Activated B cell treated with CpG ODN at 0.5 μM for 24 hours (primary cell): ENCODE measurements at regions of chr2 and their contacts with region 1.

Region 1: DNA sequence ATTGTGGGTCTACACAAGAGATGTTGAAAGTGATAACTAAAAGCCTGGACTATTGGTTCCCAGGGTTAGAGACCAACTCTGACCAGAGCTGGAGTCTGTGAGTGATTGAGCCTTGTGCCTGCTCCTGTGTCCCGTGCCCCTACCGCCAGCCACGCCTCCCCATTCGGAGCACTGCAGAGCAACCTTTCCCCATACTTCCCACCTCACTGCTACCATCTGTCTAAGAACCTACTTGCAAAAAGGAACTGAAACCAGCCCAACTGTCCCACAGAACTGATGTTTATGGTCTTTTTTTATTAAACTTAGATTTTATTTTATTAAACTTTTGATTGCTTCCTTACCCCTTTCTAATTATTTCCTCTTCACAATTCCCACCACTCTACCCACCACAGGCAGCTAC is 300.3 kb upstream of the MGAT5 start:
- DNase-seq: peak; percentile 44
- ATAC-seq: peak; percentile 84
- H3K4me3 Mint-ChIP-seq: peak overlapping the region; percentile 46
- H3K27ac Mint-ChIP-seq: peak overlapping the region; percentile 78
- H3K4me1 Mint-ChIP-seq: peaks cover 83% of the 10 kb centered on the region
- H3K27me3 Mint-ChIP-seq: no peaks in the 10 kb centered on the region
- CTCF ChIP-seq: no peak

Region 2: GRCh38 chr2:133231264-133231663 is 722.3 kb before region 1 on chr2:
- CTCF ChIA-PET with region 1: no interaction called
- POLR2A ChIA-PET with region 1: no interaction called
- intact Hi-C with region 1: no loop called
- DNase-seq: no peak
- ATAC-seq: no peak
- H3K4me3 Mint-ChIP-seq: no peak overlapping the region
- H3K27ac Mint-ChIP-seq: no peak overlapping the region
- H3K4me1 Mint-ChIP-seq: no peaks in the 10 kb centered on the region
- H3K27me3 Mint-ChIP-seq: no peaks in the 10 kb centered on the region
- CTCF ChIP-seq: no peak

Region 3: DNA sequence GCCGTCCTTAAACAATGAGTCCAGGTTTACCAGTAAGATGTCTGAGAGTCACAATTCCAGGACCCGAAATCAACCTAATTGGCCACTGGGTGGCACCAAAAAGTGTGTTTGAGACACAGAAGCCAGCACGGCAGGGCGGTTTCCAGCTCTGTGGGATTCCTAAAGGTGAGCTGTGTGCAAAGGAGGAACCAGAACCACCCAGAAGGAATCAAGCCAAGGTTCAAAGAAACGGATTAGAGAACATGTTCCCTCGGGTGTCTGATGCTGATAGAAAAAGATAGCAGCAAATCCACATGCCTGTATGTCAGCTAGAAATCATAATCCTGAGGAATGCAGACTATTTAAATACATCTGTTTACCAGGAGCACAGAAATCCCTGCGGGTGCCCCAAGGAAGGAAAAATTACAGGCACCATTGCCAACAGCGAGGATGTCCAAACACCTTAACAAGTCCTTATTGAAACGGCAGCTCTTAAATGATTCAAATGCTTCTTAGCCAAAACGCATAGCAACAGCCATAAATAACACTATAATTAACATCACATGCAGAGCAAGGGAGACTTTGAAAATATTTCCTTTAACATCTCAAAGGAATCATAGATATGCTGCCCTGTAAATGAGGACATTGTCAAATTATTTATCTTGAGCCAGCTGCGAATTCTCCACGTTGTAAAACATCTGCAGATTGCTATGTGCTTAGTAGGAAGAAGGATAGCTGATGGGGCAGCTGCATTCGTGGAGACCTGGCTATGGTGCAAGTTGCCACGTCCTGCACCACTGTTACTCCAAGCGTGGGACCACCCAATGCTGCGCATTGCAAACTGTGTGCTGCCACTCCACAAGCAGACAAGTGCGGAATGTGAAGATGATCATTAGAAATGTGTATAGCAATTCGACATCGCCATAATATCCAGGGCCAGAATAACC is 66.5 kb before region 1 on chr2:
- CTCF ChIA-PET with region 1: interaction called, 4 read pairs
- POLR2A ChIA-PET with region 1: no interaction called
- intact Hi-C with region 1: loop called (anchors 2 kb)
- DNase-seq: peak; percentile 36
- ATAC-seq: peak; percentile 70
- H3K4me3 Mint-ChIP-seq: no peak overlapping the region
- H3K27ac Mint-ChIP-seq: no peak overlapping the region
- H3K4me1 Mint-ChIP-seq: peaks cover 10% of the 10 kb centered on the region
- H3K27me3 Mint-ChIP-seq: peaks cover 7% of the 10 kb centered on the region
- CTCF ChIP-seq: no peak

Region 4: DNA sequence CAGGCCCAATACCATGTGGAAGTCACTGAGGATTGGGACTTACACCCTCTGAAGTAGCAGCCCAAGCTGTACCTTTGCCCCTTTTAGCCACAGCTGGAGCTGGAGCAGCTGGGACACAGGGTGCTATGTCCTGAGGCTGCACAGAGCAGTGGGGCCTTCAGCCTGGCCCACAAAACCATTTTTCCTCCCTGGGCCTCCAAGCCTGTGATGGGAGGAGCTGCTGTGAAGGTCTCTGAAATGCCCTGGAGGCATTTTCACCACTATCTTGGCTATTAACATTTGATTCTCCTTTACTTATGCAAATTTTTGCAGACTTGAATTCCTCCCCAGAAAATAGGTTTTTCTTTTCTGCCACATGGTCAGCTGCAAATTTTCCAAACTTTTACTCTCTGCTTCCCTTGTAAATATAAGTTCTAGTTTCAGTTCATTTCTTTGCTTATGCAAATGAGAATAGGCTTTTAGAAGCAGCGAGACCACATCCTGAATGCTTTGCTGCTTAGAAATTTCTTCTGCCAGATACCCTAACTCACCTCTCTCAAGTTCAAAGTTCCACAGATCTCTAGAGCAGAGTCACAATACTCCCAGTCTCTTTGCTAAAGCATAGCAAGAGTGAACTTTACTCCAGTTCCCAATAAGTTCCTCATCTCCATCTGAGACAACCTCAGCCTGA is 86.5 kb after region 1 on chr2:
- CTCF ChIA-PET with region 1: no interaction called
- POLR2A ChIA-PET with region 1: interaction called, 4 read pairs
- intact Hi-C with region 1: loop called (anchors 1 kb)
- DNase-seq: no peak
- ATAC-seq: peak; percentile 57
- H3K4me3 Mint-ChIP-seq: peak overlapping the region; percentile 65
- H3K27ac Mint-ChIP-seq: peak overlapping the region; percentile 90
- H3K4me1 Mint-ChIP-seq: peaks cover 66% of the 10 kb centered on the region
- H3K27me3 Mint-ChIP-seq: no peaks in the 10 kb centered on the region
- CTCF ChIP-seq: no peak

Region 5: GRCh38 chr2:134207564-134208209 is 254.2 kb after region 1 on chr2:
- CTCF ChIA-PET with region 1: no interaction called
- POLR2A ChIA-PET with region 1: interaction called, 3 read pairs
- intact Hi-C with region 1: loop called (anchors 10 kb)
- DNase-seq: peak; percentile 42
- ATAC-seq: peak; percentile 84
- H3K4me3 Mint-ChIP-seq: no peak overlapping the region
- H3K27ac Mint-ChIP-seq: peak overlapping the region; percentile 46
- H3K4me1 Mint-ChIP-seq: peaks cover 9% of the 10 kb centered on the region
- H3K27me3 Mint-ChIP-seq: no peaks in the 10 kb centered on the region
- CTCF ChIP-seq: no peak

Region 6: GRCh38 chr2:134402410-134402809 is 448.9 kb after region 1 on chr2:
- CTCF ChIA-PET with region 1: no interaction called
- POLR2A ChIA-PET with region 1: no interaction called
- intact Hi-C with region 1: loop called (anchors 2 kb)
- DNase-seq: no peak
- ATAC-seq: no peak
- H3K4me3 Mint-ChIP-seq: no peak overlapping the region
- H3K27ac Mint-ChIP-seq: peak overlapping the region; percentile 33
- H3K4me1 Mint-ChIP-seq: peaks cover 16% of the 10 kb centered on the region
- H3K27me3 Mint-ChIP-seq: no peaks in the 10 kb centered on the region
- CTCF ChIP-seq: no peak

Region 7: DNA sequence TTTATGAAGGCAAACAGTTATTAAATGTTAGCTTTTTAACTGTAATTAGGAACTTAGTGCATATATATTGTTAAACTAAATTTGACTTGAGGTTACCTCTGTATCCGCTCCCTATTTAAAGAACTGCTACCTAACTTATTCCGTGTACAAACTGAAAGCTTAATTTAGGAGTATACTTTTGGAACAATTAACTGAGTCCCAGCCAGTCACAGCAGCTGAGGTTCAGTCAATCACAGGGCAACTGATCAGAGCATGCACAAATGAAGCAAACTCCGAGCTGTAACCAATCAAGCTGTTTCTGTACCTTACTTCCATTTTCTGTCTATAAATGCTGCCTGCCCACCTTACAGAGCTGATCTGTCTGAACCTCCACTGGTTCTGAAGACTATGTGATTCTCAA is 1159.8 kb after region 1 on chr2:
- CTCF ChIA-PET with region 1: no interaction called
- POLR2A ChIA-PET with region 1: no interaction called
- intact Hi-C with region 1: no loop called
- DNase-seq: no peak
- ATAC-seq: no peak
- H3K4me3 Mint-ChIP-seq: no peak overlapping the region
- H3K27ac Mint-ChIP-seq: no peak overlapping the region
- H3K4me1 Mint-ChIP-seq: peaks cover 6% of the 10 kb centered on the region
- H3K27me3 Mint-ChIP-seq: no peaks in the 10 kb centered on the region
- CTCF ChIP-seq: no peak